KBM-7 (cell line): ENCODE measurements at regions of chr22 and their contacts with region 1.

Region 1: GRCh38 chr22:35349704-35350538 is 31.0 kb upstream of the HMOX1 start:
- DNase-seq: no peak

Region 2: GRCh38 chr22:35023692-35024363 is 326.1 kb before region 1 on chr22:
- in situ Hi-C with region 1: no loop called
- DNase-seq: peak; percentile 62

Region 3: GRCh38 chr22:35582861-35583670 is 233.1 kb after region 1 on chr22:
- in situ Hi-C with region 1: loop called (anchors 10 kb)
- DNase-seq: peak; percentile 79